Thyroid gland (tissue), 4 donors: ENCODE measurements at regions of chr17 and their contacts with region 1.

Region 1: GRCh38 chr17:32320847-32321246 is 21.1 kb downstream of the C17orf75 start:
- DNase-seq: no peak
- H3K4me3 ChIP-seq: no peak overlapping the region
- H3K27ac ChIP-seq: no peak overlapping the region
- H3K4me1 ChIP-seq: peaks cover 4 to 9% of the 10 kb centered on the region in 2 donors
- H3K27me3 ChIP-seq: no peaks in the 10 kb centered on the region
- CTCF ChIP-seq: no peak
- POLR2A ChIP-seq: no peak

Region 2: DNA sequence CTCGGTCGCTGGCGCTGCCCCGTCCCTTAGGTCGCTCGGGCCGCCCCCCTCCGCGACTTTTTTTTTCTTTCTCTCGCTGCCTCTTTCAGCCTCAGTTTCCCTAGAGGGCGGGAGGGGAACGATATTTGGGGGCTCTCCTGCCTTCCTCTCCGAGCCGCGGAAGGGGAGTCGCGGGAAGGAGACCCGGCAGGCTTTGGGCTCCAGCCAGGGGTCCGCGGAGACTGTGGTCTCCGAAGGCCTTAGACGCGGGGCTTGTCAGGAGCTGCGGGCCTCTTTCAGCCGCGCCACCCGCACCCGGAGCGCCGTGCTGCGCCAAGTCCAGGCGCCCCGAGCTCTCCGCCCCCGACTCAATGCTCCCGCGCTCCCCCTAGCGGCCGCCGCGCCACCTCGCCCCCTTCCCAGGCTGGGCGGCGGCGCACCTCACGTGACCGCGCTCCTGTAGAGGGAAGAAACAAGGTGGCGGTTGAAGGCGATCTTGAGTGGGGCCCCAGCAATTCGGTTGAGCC is 313.8 kb before region 1 on chr17 and contains the start of gene LRRC37B:
- intact Hi-C with region 1: no loop called
- DNase-seq: peak; percentile 85 to 89
- H3K4me3 ChIP-seq: peak within 1 kb of the TSS; percentile 31 to 86 (median 83)
- H3K27ac ChIP-seq: peak within 1 kb of the TSS; percentile 45 to 76 (median 59)
- H3K4me1 ChIP-seq: peaks cover 0 to 11% of the 10 kb centered on the region in 2 donors
- H3K27me3 ChIP-seq: no peaks in the 10 kb centered on the region
- CTCF ChIP-seq: peak; percentile 50 to 99 (median 94)
- POLR2A ChIP-seq: peak in 1 of 2 donors; percentile 71
- total RNA-seq, gene LRRC37B: 10.3 to 26.8 (median 17.0) TPM

Region 3: GRCh38 chr17:32253117-32253611 is 67.7 kb before region 1 on chr17:
- intact Hi-C with region 1: loop called (anchors 2 kb)
- DNase-seq: peak; percentile 76 to 77
- H3K4me3 ChIP-seq: no peak overlapping the region
- H3K27ac ChIP-seq: no peak overlapping the region
- H3K4me1 ChIP-seq: no peaks in the 10 kb centered on the region
- H3K27me3 ChIP-seq: no peaks in the 10 kb centered on the region
- CTCF ChIP-seq: peak; percentile 89 to 96 (median 92)
- POLR2A ChIP-seq: no peak